Aorta (tissue), 5 donors: ENCODE measurements at regions of chr4 and their contacts with region 1.

Region 1: DNA sequence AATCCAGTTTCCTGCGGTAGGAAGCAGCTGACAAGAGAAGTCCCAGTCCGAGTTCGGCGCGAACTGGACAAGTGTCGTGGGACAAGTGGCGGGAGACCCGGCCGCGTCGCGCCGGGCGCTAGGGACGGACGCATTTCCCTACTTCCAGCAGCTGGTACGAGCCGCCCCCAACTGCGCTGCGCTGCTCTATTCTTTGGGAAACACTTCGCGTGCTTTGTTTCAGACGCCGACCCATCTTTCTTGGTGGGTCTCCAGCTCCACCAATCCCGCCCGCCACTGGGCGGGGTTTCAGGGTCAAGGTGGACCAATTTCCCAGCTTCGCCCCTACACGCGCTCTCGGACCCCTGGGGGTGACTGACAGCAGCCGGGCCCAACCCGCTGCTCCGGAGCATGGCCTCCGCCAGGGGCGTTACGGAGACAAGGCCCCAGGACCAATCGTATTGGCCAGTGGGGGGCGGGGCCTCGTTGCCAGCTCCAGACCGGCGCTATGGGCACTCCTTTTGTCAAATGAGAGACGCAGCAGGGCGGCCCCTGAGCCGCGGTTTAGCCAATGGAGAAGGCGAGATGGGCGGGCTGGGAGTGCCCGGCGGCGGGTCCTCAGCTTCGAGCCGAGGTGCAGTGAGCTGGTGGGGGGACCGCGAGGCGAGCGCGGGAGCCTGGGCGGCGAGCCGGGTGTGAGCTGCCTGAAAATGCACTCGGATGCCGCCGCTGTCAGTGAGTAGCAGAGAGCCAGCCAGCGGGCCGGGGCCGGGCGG is at the start of gene DCUN1D4:
- DNase-seq: peak; percentile 100
- ATAC-seq: peak; percentile 97
- H3K4me3 ChIP-seq: peak within 1 kb of the TSS; percentile 87 to 88
- H3K27ac ChIP-seq: peak within 1 kb of the TSS; percentile 28 to 88
- H3K4me1 ChIP-seq: no peaks in the 10 kb centered on the region
- H3K27me3 ChIP-seq: no peaks in the 10 kb centered on the region
- total RNA-seq, gene DCUN1D4: 69.6 to 87.8 TPM

Region 2: GRCh38 chr4:51884055-51884454 is 41.3 kb after region 1 on chr4:
- intact Hi-C with region 1: loop called in 1 of 2 experiments (anchors 5 kb)
- DNase-seq: no peak
- ATAC-seq: peak; percentile 72
- H3K4me3 ChIP-seq: no peak overlapping the region
- H3K27ac ChIP-seq: no peak overlapping the region
- H3K4me1 ChIP-seq: peaks cover 0 to 2% of the 10 kb centered on the region in 2 donors
- H3K27me3 ChIP-seq: no peaks in the 10 kb centered on the region

Region 3: DNA sequence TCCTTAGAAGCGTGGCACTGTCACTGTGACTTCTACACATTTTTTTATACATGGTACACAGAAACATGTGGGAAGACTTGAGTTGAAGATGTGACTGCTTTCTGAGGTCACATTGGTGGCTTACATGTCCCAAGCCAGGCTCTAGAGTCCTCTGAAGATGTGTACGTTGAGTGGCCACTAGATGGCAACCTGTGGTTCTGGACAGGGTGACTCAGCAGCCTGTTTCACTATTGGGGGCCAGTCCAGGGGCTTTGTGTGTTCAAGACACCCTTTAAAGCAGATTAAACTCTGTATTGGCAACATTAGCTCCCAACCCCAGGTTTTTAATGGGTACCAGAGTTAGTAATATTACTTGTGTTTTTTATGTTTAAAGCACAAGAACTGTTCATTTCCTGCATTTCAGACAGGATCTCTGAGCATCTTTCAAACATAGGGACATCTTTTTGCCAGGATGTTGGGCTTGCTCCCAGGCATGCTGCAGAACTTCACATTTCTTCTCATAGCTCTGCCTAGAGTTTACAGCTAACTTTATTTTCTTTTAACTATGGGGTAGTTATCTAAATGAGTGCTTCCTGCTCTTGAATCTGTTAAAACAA is 53.2 kb after region 1 on chr4:
- intact Hi-C with region 1: loop called in 1 of 2 experiments (anchors 5 kb)
- DNase-seq: peak in 1 of 2 donors; percentile 67
- ATAC-seq: peak; percentile 91
- H3K4me3 ChIP-seq: no peak overlapping the region
- H3K27ac ChIP-seq: no peak overlapping the region
- H3K4me1 ChIP-seq: peaks cover 3 to 4% of the 10 kb centered on the region in 2 donors
- H3K27me3 ChIP-seq: no peaks in the 10 kb centered on the region

Region 4: GRCh38 chr4:52028969-52029368 is 186.2 kb after region 1 on chr4:
- intact Hi-C with region 1: loop called in 1 of 2 experiments (anchors 5 kb)
- DNase-seq: no peak
- ATAC-seq: no peak
- H3K4me3 ChIP-seq: no peak overlapping the region
- H3K27ac ChIP-seq: no peak overlapping the region
- H3K4me1 ChIP-seq: peaks cover 0 to 2% of the 10 kb centered on the region in 2 donors
- H3K27me3 ChIP-seq: no peaks in the 10 kb centered on the region

Region 5: DNA sequence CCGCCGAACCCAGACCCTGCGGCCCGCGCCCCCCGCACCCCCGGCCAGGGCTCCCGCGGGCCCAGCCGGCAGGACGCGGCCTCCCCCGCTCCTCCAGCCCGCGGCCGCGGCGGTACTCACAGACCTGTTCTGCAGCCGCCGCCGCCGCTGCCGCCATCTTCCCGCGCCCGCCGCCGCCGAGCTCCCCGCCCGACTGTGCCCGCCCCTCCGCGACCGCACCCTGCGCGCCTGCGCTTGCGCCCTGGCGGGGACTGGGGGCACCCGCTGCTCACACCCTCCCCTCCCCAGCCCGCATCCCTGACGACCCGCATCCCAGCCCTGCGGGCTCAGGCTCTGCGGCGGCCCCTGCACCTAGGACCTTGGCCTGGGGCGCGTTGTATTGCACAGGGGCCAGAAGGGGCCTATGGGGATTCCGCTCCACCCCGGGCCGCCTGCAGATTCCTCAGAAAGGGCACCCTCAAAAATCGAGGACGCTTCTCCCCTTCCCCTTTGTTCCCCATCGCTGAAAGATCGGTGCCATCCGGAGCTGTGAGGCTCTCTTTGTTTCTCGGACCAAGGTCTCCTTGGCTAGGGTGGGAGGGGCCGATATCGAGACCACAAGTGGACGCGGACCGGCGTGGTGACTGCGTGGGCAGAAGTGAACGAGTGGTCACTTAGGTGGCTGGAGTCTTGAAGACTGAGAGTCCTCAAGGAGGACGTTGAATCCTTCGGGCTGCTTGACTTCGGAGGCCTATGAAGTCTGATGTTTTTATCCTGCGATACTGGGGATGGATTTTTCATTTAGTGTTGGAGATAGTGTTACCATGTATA is 195.6 kb after region 1 on chr4 and contains the start of gene SGCB:
- intact Hi-C with region 1: loop called in 1 of 2 experiments (anchors 5 kb)
- DNase-seq: peak; percentile 80 to 92
- ATAC-seq: peak; percentile 92
- H3K4me3 ChIP-seq: peak within 1 kb of the TSS; percentile 97 to 99
- H3K27ac ChIP-seq: peak within 1 kb of the TSS; percentile 6 to 77
- H3K4me1 ChIP-seq: peaks cover 6 to 12% of the 10 kb centered on the region in 2 donors
- H3K27me3 ChIP-seq: no peaks in the 10 kb centered on the region
- total RNA-seq, gene SGCB: 72.6 to 79.6 TPM

Region 6: GRCh38 chr4:52560844-52561280 is 718.1 kb after region 1 on chr4:
- intact Hi-C with region 1: no loop called
- DNase-seq: no peak
- ATAC-seq: no peak
- H3K4me3 ChIP-seq: no peak overlapping the region
- H3K27ac ChIP-seq: no peak overlapping the region
- H3K4me1 ChIP-seq: no peaks in the 10 kb centered on the region
- H3K27me3 ChIP-seq: peaks cover 0 to 1% of the 10 kb centered on the region in 2 donors